ENCODE measurements at regions of chr14 and their contacts with region 1.

Region 1: DNA sequence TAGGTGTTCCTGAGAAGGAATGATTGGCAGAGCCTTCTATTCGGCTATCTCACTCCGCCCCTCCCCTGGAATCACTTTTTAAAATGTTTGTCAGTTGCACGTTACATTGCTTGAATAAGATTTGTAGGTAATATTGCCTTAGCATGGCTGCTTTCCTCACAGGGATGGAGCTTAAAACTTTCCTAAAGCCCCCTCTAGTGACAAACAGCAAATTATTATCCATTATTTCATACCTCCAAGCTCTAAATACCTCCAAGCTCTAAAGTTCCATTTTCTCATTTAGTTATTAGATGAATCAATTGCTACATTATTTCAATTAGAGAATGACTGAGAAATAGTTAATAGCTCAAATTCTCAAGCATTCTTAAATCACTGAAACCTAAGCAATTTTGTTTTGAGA is 5.1 kb upstream of the SPATA7 start:
- DNase-seq: no peak
- ATAC-seq: no peak
- H3K4me3 ChIP-seq: no peak overlapping the region
- H3K27ac ChIP-seq: no peak overlapping the region
- H3K4me1 ChIP-seq: no peaks in the 10 kb centered on the region
- H3K27me3 ChIP-seq: no peaks in the 10 kb centered on the region; a peak in 1 of 4 replicates
- CTCF ChIP-seq: peak in 2 of 3 experiments; percentile 8 to 39; a peak in 2 of 6 replicates
- EP300 ChIP-seq: no peak
- POLR2A ChIP-seq: no peak
- RAD21 ChIP-seq: peak; percentile 36; the same call in 1 of the 2 replicates

Region 2: DNA sequence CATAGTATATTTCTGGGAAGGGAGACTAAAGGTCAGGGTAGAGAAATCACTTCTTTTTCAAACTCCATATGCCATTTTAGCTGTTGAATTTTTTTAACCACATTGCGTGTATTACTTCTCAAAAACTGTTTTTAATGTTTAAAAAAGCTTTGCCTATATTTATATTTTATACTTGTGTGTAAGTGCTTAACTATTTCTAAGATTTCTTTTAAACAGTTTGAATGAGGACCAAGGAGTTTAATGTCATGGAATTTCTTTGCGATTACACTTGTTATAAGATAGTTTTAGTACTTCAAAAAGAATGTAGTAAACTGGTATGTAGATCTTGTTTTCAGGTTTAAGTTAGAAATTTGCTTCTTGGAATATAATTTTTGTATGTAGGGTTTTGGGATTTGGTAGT is 12.2 kb after region 1 on chr14:
- CTCF ChIA-PET with region 1: interaction called, 14 read pairs
- POLR2A ChIA-PET with region 1: no interaction called
- RAD21 ChIA-PET with region 1: no interaction called
- SMC1A ChIA-PET with region 1: interaction called, 6 read pairs
- in situ Hi-C with region 1: no loop called
- intact Hi-C with region 1: no loop called
- DNase-seq: no peak
- ATAC-seq: no peak
- H3K4me3 ChIP-seq: no peak overlapping the region
- H3K27ac ChIP-seq: no peak overlapping the region
- H3K4me1 ChIP-seq: no peaks in the 10 kb centered on the region
- H3K27me3 ChIP-seq: no peaks in the 10 kb centered on the region
- CTCF ChIP-seq: no peak
- EP300 ChIP-seq: no peak
- POLR2A ChIP-seq: no peak
- RAD21 ChIP-seq: no peak

Measured in GM12878 (cell line).